Aorta (tissue), 5 donors: ENCODE measurements at regions of chr6 and their contacts with region 1.

Region 1: GRCh38 chr6:136226027-136226673 is 24.0 kb downstream of the MTFR2 start:
- DNase-seq: no peak
- ATAC-seq: peak; percentile 91
- H3K4me3 ChIP-seq: peak overlapping the region in 1 of 2 donors; percentile 59
- H3K27ac ChIP-seq: no peak overlapping the region
- H3K4me1 ChIP-seq: no peaks in the 10 kb centered on the region
- H3K27me3 ChIP-seq: no peaks in the 10 kb centered on the region

Region 2: GRCh38 chr6:135451693-135452092 is 774.5 kb before region 1 on chr6:
- intact Hi-C with region 1: loop called in 1 of 2 experiments (anchors 2 kb)
- DNase-seq: no peak
- ATAC-seq: peak; percentile 29
- H3K4me3 ChIP-seq: no peak overlapping the region
- H3K27ac ChIP-seq: no peak overlapping the region
- H3K4me1 ChIP-seq: no peaks in the 10 kb centered on the region
- H3K27me3 ChIP-seq: no peaks in the 10 kb centered on the region

Region 3: GRCh38 chr6:135506270-135506997 is 719.7 kb before region 1 on chr6:
- intact Hi-C with region 1: loop called (anchors 5 to 10 kb)
- DNase-seq: no peak
- ATAC-seq: no peak
- H3K4me3 ChIP-seq: no peak overlapping the region
- H3K27ac ChIP-seq: no peak overlapping the region
- H3K4me1 ChIP-seq: no peaks in the 10 kb centered on the region
- H3K27me3 ChIP-seq: no peaks in the 10 kb centered on the region

Region 4: DNA sequence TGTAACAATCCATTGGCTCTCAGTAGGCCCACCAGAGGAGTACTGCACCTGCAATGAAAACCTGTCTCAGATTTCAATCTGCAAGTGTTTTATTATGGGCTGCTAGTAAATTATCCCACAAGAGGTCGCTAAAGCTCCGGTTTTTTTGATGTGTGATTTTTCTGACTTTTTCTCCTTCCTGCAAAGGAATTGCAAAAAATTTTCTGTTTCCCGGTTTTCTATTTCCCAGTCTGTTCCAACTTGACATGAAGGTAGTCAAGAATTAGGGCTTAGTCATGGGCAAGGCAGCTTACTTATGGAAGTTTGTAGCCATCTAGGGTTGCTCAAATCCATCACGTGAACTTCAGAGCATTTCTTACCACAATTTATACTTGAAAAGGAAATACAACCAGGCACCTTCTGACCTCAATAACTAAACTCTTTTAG is 690.1 kb before region 1 on chr6:
- intact Hi-C with region 1: loop called (anchors 5 kb)
- DNase-seq: no peak
- ATAC-seq: peak; percentile 41
- H3K4me3 ChIP-seq: no peak overlapping the region
- H3K27ac ChIP-seq: no peak overlapping the region
- H3K4me1 ChIP-seq: no peaks in the 10 kb centered on the region
- H3K27me3 ChIP-seq: no peaks in the 10 kb centered on the region